ENCODE measurements at regions of chr3 and their contacts with region 1.

Region 1: DNA sequence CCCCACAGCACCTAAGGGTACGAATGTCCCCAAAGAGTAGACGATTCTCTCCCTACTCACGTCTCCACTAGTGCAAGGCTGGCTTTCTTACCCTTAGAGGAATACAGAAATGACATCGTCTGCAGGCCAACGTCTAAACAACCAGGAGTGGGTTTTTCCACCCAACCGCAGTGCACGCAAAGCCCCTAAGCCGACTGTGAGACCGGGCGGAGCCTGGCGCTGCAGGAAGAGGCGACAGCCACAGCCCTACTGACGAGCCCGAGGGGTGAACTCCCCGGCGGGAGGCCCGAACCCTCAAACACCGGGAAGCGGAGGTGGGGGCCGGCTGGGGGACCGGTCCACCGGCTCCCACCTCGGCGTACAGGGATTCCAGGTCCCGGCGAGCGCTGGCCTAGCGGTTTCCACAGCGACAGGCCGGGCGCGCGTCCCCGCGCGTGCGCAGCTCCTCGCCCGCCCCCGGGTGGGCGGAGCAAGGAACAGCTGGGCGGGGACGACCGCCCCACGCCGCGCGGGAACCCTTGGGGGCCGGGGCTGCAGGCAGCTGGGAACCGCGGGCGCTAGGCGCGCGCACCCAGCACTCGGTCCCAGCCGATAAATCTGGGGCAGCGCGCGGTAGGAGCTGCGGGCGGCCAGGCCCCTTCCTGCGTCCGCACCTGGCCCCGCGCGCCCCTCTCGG is at the starts of genes CEP19 and PIGX:
- DNase-seq: peak; percentile 66 to 99 (median 86)
- ATAC-seq: peak; percentile 86
- H3K4me3 ChIP-seq: peak within 1 kb of the TSS; percentile 88
- H3K4me3 Mint-ChIP-seq: peak within 1 kb of the TSS; percentile 93
- H3K27ac ChIP-seq: peak within 1 kb of the TSS; percentile 95 to 99
- H3K27ac Mint-ChIP-seq: peak within 1 kb of the TSS; percentile 94
- H3K4me1 ChIP-seq: peaks cover 29% of the 10 kb centered on the region
- H3K4me1 Mint-ChIP-seq: peaks cover 28% of the 10 kb centered on the region
- H3K27me3 ChIP-seq: no peaks in the 10 kb centered on the region
- H3K27me3 Mint-ChIP-seq: no peaks in the 10 kb centered on the region
- CTCF ChIP-seq: no peak
- total RNA-seq, gene CEP19: 0.36 to 0.64 TPM
- total RNA-seq, gene PIGX: 13.3 to 13.9 TPM

Region 2: GRCh38 chr3:196432137-196432879 is 279.7 kb before region 1 on chr3 and contains the start of gene UBXN7:
- CTCF ChIA-PET with region 1: no interaction called
- POLR2A ChIA-PET with region 1: interaction called, 3 read pairs
- intact Hi-C with region 1: loop called in 1 of 2 experiments (anchors 10 kb)
- DNase-seq: peak; percentile 92 to 99 (median 97)
- ATAC-seq: peak; percentile 85
- H3K4me3 ChIP-seq: peak within 1 kb of the TSS; percentile 98
- H3K4me3 Mint-ChIP-seq: peak within 1 kb of the TSS; percentile 84
- H3K27ac ChIP-seq: peak within 1 kb of the TSS; percentile 83 to 87
- H3K27ac Mint-ChIP-seq: peak within 1 kb of the TSS; percentile 96
- H3K4me1 ChIP-seq: peaks cover 17% of the 10 kb centered on the region
- H3K4me1 Mint-ChIP-seq: peaks cover 22% of the 10 kb centered on the region
- H3K27me3 ChIP-seq: no peaks in the 10 kb centered on the region
- H3K27me3 Mint-ChIP-seq: no peaks in the 10 kb centered on the region
- CTCF ChIP-seq: no peak
- total RNA-seq, gene UBXN7: 75.3 to 83.6 TPM

Region 3: DNA sequence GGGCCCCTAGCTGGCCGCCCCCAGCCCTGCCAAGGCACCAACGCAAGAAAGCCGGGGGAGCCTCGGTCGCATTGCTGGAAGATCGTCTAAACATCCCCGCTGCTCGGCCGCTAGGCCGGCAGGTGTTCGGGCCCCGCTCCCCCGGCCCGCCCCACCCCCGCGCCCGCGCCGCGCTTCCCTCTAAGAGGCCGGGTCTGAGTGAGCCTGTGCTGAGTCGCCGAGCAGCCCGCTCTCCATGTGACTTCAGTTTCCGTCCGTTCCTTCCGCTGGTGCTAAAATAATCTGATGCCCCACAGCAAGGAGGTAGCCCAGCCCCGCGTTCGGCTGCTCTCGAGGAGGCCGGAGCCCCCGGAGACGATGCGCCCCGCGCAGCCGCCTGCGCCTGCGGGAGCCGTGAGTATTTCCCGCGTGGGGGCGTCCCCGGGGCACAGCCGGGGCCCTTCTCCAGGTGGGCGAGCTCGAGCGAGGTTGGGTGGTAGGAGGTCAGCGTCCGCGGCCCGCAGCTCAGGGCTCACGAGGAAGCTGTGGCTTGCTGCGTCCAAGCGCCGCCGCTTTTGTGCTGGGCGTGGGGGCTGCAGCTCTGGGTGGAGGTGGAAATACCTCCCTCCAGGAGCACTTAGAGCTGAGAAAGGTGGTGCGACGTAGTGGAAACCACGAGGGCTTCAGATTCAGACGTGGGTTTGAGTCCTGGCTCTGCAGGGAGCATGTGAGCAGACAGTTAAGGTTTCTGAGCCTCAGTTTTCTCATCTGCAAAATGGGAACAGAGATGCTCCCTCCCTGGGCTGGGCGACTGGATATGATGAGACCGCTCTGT is 72.3 kb before region 1 on chr3 and contains the start of gene NRROS:
- CTCF ChIA-PET with region 1: interaction called, 3 read pairs
- POLR2A ChIA-PET with region 1: interaction called, 11 read pairs
- intact Hi-C with region 1: no loop called
- DNase-seq: peak; percentile 29 to 79 (median 54)
- ATAC-seq: peak; percentile 39
- H3K4me3 ChIP-seq: peak within 1 kb of the TSS; percentile 94
- H3K4me3 Mint-ChIP-seq: peak within 1 kb of the TSS; percentile 86
- H3K27ac ChIP-seq: peak within 1 kb of the TSS; percentile 60 to 81
- H3K27ac Mint-ChIP-seq: peak within 1 kb of the TSS; percentile 91
- H3K4me1 ChIP-seq: peaks cover 73% of the 10 kb centered on the region
- H3K4me1 Mint-ChIP-seq: peaks cover 77% of the 10 kb centered on the region
- H3K27me3 ChIP-seq: no peaks in the 10 kb centered on the region
- H3K27me3 Mint-ChIP-seq: no peaks in the 10 kb centered on the region
- CTCF ChIP-seq: no peak
- total RNA-seq, gene NRROS: 7.4 to 8.4 TPM

Region 4: GRCh38 chr3:196739671-196740480 is 27.9 kb after region 1 on chr3 and contains the start of gene PAK2:
- CTCF ChIA-PET with region 1: interaction called, 3 read pairs
- POLR2A ChIA-PET with region 1: interaction called, 57 read pairs
- intact Hi-C with region 1: loop called (anchors 1 kb)
- DNase-seq: peak; percentile 80 to 96 (median 92)
- ATAC-seq: peak; percentile 80
- H3K4me3 ChIP-seq: peak within 1 kb of the TSS; percentile 96
- H3K4me3 Mint-ChIP-seq: peak within 1 kb of the TSS; percentile 98
- H3K27ac ChIP-seq: peak within 1 kb of the TSS; percentile 86 to 95
- H3K27ac Mint-ChIP-seq: peak within 1 kb of the TSS; percentile 95
- H3K4me1 ChIP-seq: peaks cover 21% of the 10 kb centered on the region
- H3K4me1 Mint-ChIP-seq: peaks cover 35% of the 10 kb centered on the region
- H3K27me3 ChIP-seq: no peaks in the 10 kb centered on the region
- H3K27me3 Mint-ChIP-seq: no peaks in the 10 kb centered on the region
- CTCF ChIP-seq: no peak
- total RNA-seq, gene PAK2: 36.2 to 41.7 TPM

Region 5: DNA sequence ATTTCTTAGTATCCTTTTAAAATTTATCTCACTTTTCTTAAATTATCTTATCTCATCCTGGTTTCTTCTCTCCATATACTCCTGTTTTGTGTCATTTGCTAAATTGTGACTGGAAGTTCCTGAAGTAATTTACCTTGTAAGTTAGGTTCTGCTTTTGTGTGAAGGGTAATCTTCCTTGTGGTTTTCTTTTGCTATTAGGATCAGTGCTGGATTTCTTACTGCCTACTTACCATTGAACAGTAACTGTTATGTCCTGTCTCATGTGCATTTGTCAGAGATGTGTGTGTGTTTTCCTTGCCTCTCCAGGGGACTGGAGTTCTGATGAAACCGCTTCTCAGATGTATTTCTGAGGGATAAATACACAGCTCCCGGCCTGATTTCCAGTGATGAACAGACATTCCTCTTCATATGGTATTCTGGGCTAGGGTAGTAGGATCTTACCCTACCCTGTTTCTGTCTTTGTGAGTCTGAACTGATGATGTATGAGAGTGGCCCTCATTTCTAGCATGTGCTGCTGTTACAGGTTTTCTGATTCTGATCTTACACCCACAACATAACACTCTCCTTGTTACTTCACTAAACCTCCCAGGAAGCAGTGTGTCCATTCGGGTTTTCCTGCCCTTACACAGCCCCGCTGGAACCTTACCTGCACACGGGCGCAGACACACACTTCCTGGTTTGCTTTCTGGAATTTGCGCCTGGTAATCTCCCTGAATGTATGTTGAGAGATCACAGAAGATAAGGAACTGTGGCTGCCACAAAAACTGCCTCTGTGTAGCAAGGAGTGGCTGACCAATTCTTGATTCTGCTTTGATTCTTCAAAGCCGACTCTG is 42.3 kb after region 1 on chr3:
- CTCF ChIA-PET with region 1: interaction called, 3 read pairs
- POLR2A ChIA-PET with region 1: no interaction called
- intact Hi-C with region 1: loop called in 1 of 2 experiments (anchors 5 kb)
- DNase-seq: no peak
- ATAC-seq: no peak
- H3K4me3 ChIP-seq: no peak overlapping the region
- H3K4me3 Mint-ChIP-seq: peak overlapping the region; percentile 6
- H3K27ac ChIP-seq: peak overlapping the region in 1 of 2 donors; percentile 13
- H3K27ac Mint-ChIP-seq: peak overlapping the region; percentile 32
- H3K4me1 ChIP-seq: peaks cover 17% of the 10 kb centered on the region
- H3K4me1 Mint-ChIP-seq: peaks cover 57% of the 10 kb centered on the region
- H3K27me3 ChIP-seq: no peaks in the 10 kb centered on the region
- H3K27me3 Mint-ChIP-seq: no peaks in the 10 kb centered on the region
- CTCF ChIP-seq: no peak

Region 6: GRCh38 chr3:196789759-196790419 is 77.9 kb after region 1 on chr3:
- CTCF ChIA-PET with region 1: no interaction called
- POLR2A ChIA-PET with region 1: no interaction called
- intact Hi-C with region 1: loop called in 1 of 2 experiments (anchors 10 kb)
- DNase-seq: no peak
- ATAC-seq: no peak
- H3K4me3 ChIP-seq: no peak overlapping the region
- H3K4me3 Mint-ChIP-seq: no peak overlapping the region
- H3K27ac ChIP-seq: no peak overlapping the region
- H3K27ac Mint-ChIP-seq: peak overlapping the region; percentile 27
- H3K4me1 ChIP-seq: no peaks in the 10 kb centered on the region
- H3K4me1 Mint-ChIP-seq: peaks cover 48% of the 10 kb centered on the region
- H3K27me3 ChIP-seq: no peaks in the 10 kb centered on the region
- H3K27me3 Mint-ChIP-seq: no peaks in the 10 kb centered on the region
- CTCF ChIP-seq: no peak

Measured in CD4-positive, alpha-beta T cell (primary cell).